Psoas muscle (tissue), 8 donors: ENCODE measurements at regions of chr16 and their contacts with region 1.

Region 1: GRCh38 chr16:72093448-72094265 is at the starts of genes DHX38 and TXNL4B:
- DNase-seq: peak; percentile 91 to 95
- ATAC-seq: peak; percentile 98 to 99 (median 99)
- H3K4me3 ChIP-seq: peak within 1 kb of the TSS; percentile 89
- H3K27ac ChIP-seq: peak within 1 kb of the TSS; percentile 86
- H3K4me1 ChIP-seq: peaks cover 21% of the 10 kb centered on the region
- H3K27me3 ChIP-seq: no peaks in the 10 kb centered on the region
- CTCF ChIP-seq: no peak
- total RNA-seq, gene DHX38: 34.0 to 58.2 (median 50.2) TPM
- total RNA-seq, gene TXNL4B: 6.7 to 13.1 (median 8.7) TPM

Region 2: DNA sequence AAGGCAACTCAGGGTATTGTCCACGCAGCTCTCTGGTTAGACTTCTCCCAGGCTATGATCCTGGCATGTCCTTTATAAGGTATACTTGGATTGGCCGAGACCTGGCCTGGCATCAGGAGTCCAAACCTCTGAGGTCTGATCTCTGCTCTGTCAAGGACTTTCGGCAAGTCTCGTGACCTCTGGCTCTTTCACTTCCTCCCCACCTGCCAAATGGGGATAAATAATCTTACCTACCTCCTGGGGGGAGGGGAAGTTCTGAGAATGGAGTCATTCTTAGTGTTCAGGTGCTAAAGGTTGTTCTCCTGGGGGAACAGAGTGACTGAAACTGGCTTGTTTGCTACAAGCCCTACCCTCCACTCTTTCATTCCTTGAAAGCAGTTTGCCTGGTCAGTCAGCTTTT is 240.2 kb before region 1 on chr16:
- intact Hi-C with region 1: loop called in 1 of 2 experiments (anchors 10 kb)
- DNase-seq: no peak
- ATAC-seq: no peak
- H3K4me3 ChIP-seq: no peak overlapping the region
- H3K27ac ChIP-seq: peak overlapping the region; percentile 16
- H3K4me1 ChIP-seq: peaks cover 25% of the 10 kb centered on the region
- H3K27me3 ChIP-seq: no peaks in the 10 kb centered on the region
- CTCF ChIP-seq: no peak

Region 3: DNA sequence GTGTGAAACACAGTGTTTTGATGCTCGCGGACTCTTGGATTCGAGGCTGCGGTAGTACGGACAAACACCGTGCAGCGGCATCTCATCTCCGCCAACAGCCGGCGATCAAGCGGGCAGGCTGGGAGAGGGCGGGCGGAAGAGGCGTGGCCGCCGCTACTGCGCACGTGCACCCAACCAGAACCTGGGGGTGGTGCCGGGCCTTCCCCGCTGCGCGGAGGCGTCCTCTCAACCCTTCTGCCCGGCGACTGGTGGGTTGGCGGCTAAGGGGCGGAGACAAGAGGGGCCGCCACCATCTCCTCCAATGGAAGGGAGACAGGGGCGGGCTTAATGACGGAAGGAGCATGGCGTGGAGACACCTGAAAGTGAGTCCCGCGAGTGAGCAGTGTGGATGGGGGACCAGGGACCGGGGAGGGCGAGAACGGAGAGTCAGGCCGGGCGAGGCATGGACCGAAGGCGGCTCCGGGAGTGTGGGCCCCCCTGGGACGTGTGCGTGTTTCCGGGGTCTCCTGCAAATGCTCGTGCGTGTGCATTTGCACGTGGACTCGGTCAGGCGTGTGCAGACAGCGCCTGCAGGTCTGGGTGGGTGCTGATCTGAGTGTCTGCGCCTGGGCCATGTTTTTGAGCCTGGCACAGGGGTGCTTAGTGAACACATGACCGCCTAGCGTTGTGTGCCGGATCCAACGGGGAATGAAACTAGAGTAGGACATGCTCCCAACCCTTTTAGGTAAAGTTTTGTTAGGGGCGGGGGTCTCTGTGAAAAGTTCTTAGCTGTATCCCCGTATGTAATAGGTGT is 85.0 kb before region 1 on chr16 and contains the start of gene DHODH:
- intact Hi-C with region 1: loop called (anchors 2 to 5 kb)
- DNase-seq: peak; percentile 99
- ATAC-seq: peak; percentile 99 to 100 (median 99)
- H3K4me3 ChIP-seq: peak within 1 kb of the TSS; percentile 99
- H3K27ac ChIP-seq: peak within 1 kb of the TSS; percentile 93
- H3K4me1 ChIP-seq: peaks cover 6% of the 10 kb centered on the region
- H3K27me3 ChIP-seq: no peaks in the 10 kb centered on the region
- CTCF ChIP-seq: no peak
- total RNA-seq, gene DHODH: 7.3 to 12.5 (median 8.8) TPM

Region 4: GRCh38 chr16:72404299-72404698 is 310.6 kb after region 1 on chr16:
- intact Hi-C with region 1: no loop called
- DNase-seq: no peak
- ATAC-seq: no peak
- H3K4me3 ChIP-seq: no peak overlapping the region
- H3K27ac ChIP-seq: no peak overlapping the region
- H3K4me1 ChIP-seq: no peaks in the 10 kb centered on the region
- H3K27me3 ChIP-seq: no peaks in the 10 kb centered on the region
- CTCF ChIP-seq: no peak